ENCODE measurements at regions of chr11 and their contacts with region 1.

Region 1: GRCh38 chr11:119615003-119615881 is 113.8 kb downstream of the NECTIN1 start:
- DNase-seq: peak; percentile 88
- H3K4me3 ChIP-seq: no peak overlapping the region
- H3K27ac ChIP-seq: peak overlapping the region; percentile 89
- H3K4me1 ChIP-seq: peaks cover 44% of the 10 kb centered on the region
- H3K27me3 ChIP-seq: no peaks in the 10 kb centered on the region
- CTCF ChIP-seq: no peak
- POLR2A ChIP-seq: peak; percentile 53

Region 2: DNA sequence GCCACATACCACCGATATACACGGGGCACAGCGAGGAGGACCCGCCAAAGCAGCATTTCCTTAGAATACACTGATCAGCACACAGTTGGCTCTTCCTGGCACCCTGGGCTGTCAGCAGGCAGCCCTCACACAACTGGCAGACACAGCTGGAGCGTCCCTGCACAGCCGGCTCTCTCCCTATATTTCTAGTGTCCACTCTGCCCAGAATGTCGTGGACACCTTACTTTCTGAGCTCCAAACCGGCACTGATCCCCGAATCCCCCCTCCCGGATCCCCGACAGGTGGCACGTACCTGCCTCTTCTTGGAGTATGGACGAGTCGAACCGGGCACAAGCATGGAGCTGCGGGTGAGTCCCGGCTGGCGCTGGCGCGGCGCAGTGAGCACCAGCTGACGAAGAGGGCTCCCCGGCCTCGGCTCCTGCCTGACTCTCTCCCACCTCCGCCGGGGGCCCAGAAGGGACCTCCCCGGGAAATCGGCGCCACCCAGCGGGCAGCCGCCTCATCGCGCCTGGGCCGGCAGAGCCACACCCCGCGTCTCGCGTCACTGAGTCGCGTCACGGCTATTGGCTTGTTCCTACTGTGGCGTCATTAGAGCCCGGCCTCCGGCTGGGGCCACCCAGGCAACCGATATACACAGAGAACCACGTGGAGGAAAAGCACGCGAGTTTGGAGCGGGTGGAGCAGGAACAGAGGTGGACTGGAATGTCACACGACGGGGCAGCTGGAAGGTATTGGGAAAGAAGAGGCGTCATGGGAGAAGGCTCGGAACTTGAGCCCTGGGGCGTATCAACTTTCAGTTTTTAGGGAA is 233.9 kb before region 1 on chr11 and contains the start of gene USP2:
- CTCF ChIA-PET with region 1: no interaction called
- POLR2A ChIA-PET with region 1: no interaction called
- dilution Hi-C with region 1: no loop called
- intact Hi-C with region 1: loop called (anchors 1 kb)
- DNase-seq: peak; percentile 95
- H3K4me3 ChIP-seq: peak within 1 kb of the TSS in 2 of 3 experiments; percentile 41 to 51
- H3K27ac ChIP-seq: no peak within 1 kb of the TSS
- H3K4me1 ChIP-seq: peaks cover 10% of the 10 kb centered on the region
- H3K27me3 ChIP-seq: peaks cover 7 to 14% of the 10 kb centered on the region in 2 experiments
- CTCF ChIP-seq: peak; percentile 92
- POLR2A ChIP-seq: no peak
- total RNA-seq, gene USP2: 1.1 and 1.2 TPM in 2 replicates

Region 3: DNA sequence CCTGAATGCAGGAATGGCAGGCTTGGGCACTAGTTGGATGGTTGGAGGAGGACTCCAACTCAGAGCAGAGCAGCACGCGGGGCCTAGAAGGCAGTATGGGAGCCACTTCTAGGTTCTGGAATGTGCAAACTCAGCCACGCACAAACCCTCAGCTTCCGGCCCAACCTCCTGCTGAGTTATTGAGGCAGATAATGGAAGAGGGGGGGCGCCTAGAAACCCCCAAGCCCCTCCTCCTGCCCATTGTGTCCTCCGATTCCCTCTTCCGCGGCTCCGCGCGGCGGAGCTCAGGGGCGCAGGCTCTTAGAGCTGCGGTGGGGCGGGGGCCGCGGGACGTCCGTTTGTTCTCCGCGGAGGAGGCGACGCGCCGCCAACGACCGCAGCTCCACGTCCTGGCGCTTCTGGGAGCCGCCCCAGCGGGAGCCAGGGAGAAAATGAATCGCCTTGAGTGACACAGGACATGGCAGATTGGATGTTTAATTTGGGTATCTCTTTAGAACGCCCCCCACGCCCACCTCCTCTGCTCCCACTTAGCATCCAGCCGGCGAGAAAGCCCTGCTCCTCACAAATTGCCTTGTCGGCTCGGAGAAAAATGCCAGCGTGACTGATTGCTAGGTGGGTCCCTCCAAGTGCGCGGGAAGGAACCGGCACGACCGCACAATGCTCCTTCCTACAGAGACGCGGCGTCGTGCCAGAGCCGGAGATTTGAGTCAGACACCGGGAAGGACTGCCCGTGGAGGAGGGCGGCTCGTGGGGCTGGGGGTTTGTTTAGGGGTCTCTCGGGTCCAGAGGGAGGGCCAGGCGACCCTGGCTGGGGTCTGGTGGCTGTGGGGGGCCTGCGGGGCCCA is 30.8 kb before region 1 on chr11:
- CTCF ChIA-PET with region 1: interaction called, 7 read pairs
- POLR2A ChIA-PET with region 1: no interaction called
- dilution Hi-C with region 1: no loop called
- intact Hi-C with region 1: loop called (anchors 1 kb)
- DNase-seq: peak; percentile 64
- H3K4me3 ChIP-seq: peak overlapping the region; percentile 25 to 41 (median 34)
- H3K27ac ChIP-seq: no peak overlapping the region
- H3K4me1 ChIP-seq: peaks cover 7% of the 10 kb centered on the region
- H3K27me3 ChIP-seq: peaks cover 0 to 4% of the 10 kb centered on the region in 2 experiments
- CTCF ChIP-seq: no peak
- POLR2A ChIP-seq: peak; percentile 33

Region 4: DNA sequence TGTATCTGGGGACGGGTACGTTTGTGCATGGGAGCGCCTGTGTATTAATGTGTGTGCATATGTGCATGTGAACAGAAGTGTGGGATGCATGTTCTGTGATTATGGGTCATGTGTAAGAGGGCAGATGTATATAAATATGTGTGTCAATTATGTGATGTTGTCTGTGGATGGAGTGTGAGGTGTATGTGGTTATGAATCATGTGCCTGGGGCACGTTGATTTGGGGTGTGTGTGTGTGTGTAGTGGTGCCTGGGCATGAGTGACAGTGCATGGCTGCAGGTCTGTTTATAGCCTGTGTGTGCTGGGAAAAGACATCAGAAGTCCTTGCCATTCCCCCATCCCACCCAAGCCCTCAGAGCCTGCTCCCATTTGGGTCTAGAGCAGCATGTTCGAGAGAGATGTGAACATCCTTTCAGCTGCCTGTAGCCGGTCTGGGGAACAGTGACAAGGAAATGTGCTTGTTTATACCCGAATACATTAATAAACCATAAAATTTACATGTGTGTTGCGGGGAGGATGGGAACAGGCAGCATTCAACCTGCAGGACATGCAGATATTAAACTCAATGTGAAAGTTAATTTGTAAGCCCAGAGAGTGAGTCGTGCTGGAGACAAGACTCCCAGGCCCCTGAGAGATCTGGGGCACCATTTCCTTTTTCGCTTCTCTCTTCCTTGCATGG is 15.2 kb before region 1 on chr11:
- CTCF ChIA-PET with region 1: interaction called, 8 read pairs
- POLR2A ChIA-PET with region 1: no interaction called
- dilution Hi-C with region 1: no loop called
- intact Hi-C with region 1: loop called (anchors 2 kb)
- DNase-seq: no peak
- H3K4me3 ChIP-seq: no peak overlapping the region
- H3K27ac ChIP-seq: no peak overlapping the region
- H3K4me1 ChIP-seq: peaks cover 12% of the 10 kb centered on the region
- H3K27me3 ChIP-seq: no peaks in the 10 kb centered on the region
- CTCF ChIP-seq: no peak
- POLR2A ChIP-seq: no peak

Region 5: DNA sequence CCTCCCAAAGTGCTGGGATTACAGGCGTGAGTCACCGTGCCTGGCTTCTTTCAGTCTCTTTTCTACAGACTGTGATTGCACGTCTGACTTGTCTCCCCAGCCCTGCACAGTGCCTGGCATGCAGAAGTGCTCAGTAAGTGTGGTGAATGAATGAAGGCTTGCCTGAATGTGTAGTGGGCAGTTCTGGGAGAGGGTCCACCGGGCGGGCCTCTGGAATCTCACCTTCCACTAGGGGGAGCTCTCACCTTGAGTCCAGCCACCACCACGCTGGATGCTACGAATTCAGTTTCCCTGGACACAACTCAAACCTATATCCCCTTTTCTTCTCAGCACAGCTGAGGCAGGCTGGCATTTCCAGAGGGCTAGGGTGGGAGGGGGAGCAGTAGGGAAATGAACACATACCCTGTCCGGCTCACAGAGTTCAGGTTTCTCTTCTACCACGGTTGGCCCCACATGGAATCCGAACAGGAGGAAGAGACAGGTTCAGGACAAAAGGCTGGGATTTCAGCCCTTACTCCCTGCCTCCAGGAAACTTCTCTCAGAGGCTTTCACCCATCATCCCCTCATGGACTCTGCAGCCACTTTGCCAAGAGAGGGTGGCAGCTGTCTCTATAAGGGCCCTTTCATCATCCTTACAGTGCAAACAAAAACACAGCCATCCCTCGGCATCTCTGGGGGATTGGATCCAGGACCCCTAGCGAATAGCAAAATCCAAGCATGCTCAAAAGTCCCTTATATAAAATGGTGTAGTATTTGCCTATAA is 26.9 kb after region 1 on chr11:
- CTCF ChIA-PET with region 1: interaction called, 10 read pairs
- POLR2A ChIA-PET with region 1: no interaction called
- dilution Hi-C with region 1: no loop called
- intact Hi-C with region 1: no loop called
- DNase-seq: peak; percentile 13
- H3K4me3 ChIP-seq: no peak overlapping the region
- H3K27ac ChIP-seq: no peak overlapping the region
- H3K4me1 ChIP-seq: no peaks in the 10 kb centered on the region
- H3K27me3 ChIP-seq: peaks cover 0 to 2% of the 10 kb centered on the region in 2 experiments
- CTCF ChIP-seq: peak; percentile 59 to 69
- POLR2A ChIP-seq: no peak

Region 6: GRCh38 chr11:119774172-119774763 is 159.0 kb after region 1 on chr11:
- CTCF ChIA-PET with region 1: no interaction called
- POLR2A ChIA-PET with region 1: no interaction called
- dilution Hi-C with region 1: no loop called
- intact Hi-C with region 1: no loop called
- DNase-seq: peak; percentile 10
- H3K4me3 ChIP-seq: no peak overlapping the region
- H3K27ac ChIP-seq: no peak overlapping the region
- H3K4me1 ChIP-seq: no peaks in the 10 kb centered on the region
- H3K27me3 ChIP-seq: peaks cover 0 to 2% of the 10 kb centered on the region in 2 experiments
- CTCF ChIP-seq: no peak
- POLR2A ChIP-seq: no peak

Region 7: DNA sequence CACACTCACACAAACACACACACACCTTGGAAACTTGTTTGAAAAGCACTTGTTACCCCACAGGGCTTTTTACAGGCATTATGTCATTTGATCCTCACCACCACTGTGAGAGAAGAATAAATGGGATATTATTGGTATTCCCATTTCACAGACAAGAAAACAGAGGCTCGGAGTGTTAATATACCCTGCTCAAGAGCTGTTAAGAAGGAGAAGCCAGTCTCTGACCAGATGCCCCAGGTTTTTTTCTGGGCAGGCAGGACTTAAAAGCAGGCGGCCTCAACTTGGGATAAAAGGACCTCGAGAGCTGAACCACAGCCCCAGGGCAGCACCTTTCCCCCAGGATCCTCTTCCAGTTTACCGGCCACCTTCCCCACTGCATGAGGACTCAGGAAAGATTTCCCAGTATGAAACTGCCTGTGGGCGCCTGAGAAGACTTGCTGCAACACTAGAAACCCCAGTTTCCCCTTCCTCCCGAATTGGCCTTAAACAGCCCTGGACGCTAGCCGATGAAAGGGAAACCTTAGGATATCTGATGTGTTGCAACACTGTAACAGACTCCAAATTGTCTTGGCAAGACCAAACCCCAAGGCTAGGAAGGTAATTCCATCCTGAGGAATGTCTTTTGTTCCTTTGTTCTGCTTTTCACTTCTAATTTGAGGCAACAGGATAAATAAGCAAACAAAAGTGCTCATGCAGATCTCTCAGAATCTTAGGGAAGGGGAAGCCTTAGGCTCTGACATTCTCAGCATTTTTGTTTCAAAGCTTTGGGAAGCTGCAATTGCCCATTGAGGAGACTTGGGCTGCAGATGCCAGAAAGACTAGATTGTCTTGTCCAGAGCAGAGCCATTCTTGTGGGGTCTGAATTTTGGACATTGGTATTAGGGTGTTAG is 349.1 kb after region 1 on chr11:
- CTCF ChIA-PET with region 1: no interaction called
- POLR2A ChIA-PET with region 1: no interaction called
- dilution Hi-C with region 1: no loop called
- intact Hi-C with region 1: no loop called
- DNase-seq: no peak
- H3K4me3 ChIP-seq: no peak overlapping the region
- H3K27ac ChIP-seq: no peak overlapping the region
- H3K4me1 ChIP-seq: no peaks in the 10 kb centered on the region
- H3K27me3 ChIP-seq: peaks cover 0 to 3% of the 10 kb centered on the region in 2 experiments
- CTCF ChIP-seq: no peak
- POLR2A ChIP-seq: no peak

Measured in endothelial cell of umbilical vein (primary cell).